ENCODE measurements at regions of chr2 and their contacts with region 1.

Region 1: GRCh38 chr2:228417956-228418355 is 236.5 kb upstream of the SPHKAP start:
- DNase-seq: peak in 1 of 3 donors; percentile 8
- H3K4me3 ChIP-seq: no peak overlapping the region
- H3K27ac ChIP-seq: no peak overlapping the region
- H3K4me1 ChIP-seq: no peaks in the 10 kb centered on the region
- H3K27me3 ChIP-seq: no peaks in the 10 kb centered on the region

Region 2: DNA sequence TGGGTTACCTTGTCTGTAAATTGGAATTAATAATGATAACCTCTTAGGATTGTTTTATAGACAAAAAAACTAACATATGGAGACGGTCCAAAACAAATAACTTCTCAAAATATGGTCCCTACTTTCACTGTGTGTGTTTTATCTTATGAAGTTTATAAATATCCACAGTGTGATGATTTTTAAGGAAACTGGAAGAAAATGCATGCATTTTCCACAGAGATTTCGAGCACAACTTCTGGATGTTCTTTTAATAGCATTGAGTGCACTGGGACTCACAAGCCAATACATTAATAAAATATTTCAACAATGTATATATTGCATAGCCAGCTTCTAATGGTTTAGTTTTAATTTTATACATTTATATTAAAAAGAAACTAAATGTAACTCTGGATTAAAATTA is 148.6 kb before region 1 on chr2:
- CTCF ChIA-PET with region 1: no interaction called
- POLR2A ChIA-PET with region 1: interaction called, 10 read pairs
- DNase-seq: no peak
- H3K4me3 ChIP-seq: no peak overlapping the region
- H3K27ac ChIP-seq: no peak overlapping the region
- H3K4me1 ChIP-seq: no peaks in the 10 kb centered on the region
- H3K27me3 ChIP-seq: no peaks in the 10 kb centered on the region

Region 3: GRCh38 chr2:228556717-228557116 is 138.8 kb after region 1 on chr2:
- CTCF ChIA-PET with region 1: no interaction called
- POLR2A ChIA-PET with region 1: no interaction called
- DNase-seq: no peak
- H3K4me3 ChIP-seq: no peak overlapping the region
- H3K27ac ChIP-seq: no peak overlapping the region
- H3K4me1 ChIP-seq: no peaks in the 10 kb centered on the region
- H3K27me3 ChIP-seq: no peaks in the 10 kb centered on the region

Measured in common myeloid progenitor, CD34-positive (primary cell).